Right ventricle myocardium inferior (tissue), 1 donor: ENCODE measurements at regions of chr4 and their contacts with region 1.

Region 1: GRCh38 chr4:88284439-88285234 is at the start of gene PPM1K:
- DNase-seq: peak; percentile 100
- ATAC-seq: peak; percentile 98
- total RNA-seq, gene PPM1K: 125 TPM

Region 2: DNA sequence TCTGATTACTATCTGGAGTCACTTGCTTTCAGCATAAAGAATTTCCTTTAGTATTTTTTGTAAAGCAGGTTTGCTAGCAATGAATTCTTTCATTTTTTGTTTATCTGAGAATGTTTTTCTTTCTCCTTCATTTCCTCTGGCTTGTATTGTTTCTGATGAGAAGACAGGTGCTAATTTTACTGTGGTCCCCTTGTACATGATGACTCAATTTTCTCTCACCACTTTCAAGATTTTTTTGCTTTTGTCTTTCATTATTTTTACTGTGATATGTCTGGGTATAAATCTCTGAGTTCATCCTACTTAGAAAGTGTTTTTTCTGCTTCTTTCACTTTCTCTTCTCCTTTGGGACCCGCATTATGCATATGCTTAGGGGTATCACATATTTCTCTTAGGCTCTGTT is 214.6 kb before region 1 on chr4:
- intact Hi-C with region 1: no loop called
- DNase-seq: no peak
- ATAC-seq: no peak

Region 3: GRCh38 chr4:88225232-88226105 is 59.2 kb before region 1 on chr4:
- intact Hi-C with region 1: loop called (anchors 10 kb)
- DNase-seq: no peak
- ATAC-seq: no peak

Region 4: GRCh38 chr4:88320780-88321373 is 36.2 kb after region 1 on chr4:
- intact Hi-C with region 1: no loop called
- DNase-seq: no peak
- ATAC-seq: peak; percentile 54

Region 5: GRCh38 chr4:88341227-88342192 is 56.9 kb after region 1 on chr4:
- intact Hi-C with region 1: loop called (anchors 2 kb)
- DNase-seq: no peak
- ATAC-seq: peak; percentile 97

Region 6: GRCh38 chr4:88378691-88379559 is 94.3 kb after region 1 on chr4 and contains the start of gene HERC6:
- intact Hi-C with region 1: loop called (anchors 1 kb)
- DNase-seq: peak; percentile 89
- ATAC-seq: peak; percentile 95
- total RNA-seq, gene HERC6: 6.1 TPM

Region 7: GRCh38 chr4:88456757-88457306 is 172.2 kb after region 1 on chr4 and contains the start of gene HERC5:
- intact Hi-C with region 1: loop called (anchors 2 kb)
- DNase-seq: peak; percentile 94
- ATAC-seq: peak; percentile 93
- total RNA-seq, gene HERC5: 1.6 TPM

Region 8: DNA sequence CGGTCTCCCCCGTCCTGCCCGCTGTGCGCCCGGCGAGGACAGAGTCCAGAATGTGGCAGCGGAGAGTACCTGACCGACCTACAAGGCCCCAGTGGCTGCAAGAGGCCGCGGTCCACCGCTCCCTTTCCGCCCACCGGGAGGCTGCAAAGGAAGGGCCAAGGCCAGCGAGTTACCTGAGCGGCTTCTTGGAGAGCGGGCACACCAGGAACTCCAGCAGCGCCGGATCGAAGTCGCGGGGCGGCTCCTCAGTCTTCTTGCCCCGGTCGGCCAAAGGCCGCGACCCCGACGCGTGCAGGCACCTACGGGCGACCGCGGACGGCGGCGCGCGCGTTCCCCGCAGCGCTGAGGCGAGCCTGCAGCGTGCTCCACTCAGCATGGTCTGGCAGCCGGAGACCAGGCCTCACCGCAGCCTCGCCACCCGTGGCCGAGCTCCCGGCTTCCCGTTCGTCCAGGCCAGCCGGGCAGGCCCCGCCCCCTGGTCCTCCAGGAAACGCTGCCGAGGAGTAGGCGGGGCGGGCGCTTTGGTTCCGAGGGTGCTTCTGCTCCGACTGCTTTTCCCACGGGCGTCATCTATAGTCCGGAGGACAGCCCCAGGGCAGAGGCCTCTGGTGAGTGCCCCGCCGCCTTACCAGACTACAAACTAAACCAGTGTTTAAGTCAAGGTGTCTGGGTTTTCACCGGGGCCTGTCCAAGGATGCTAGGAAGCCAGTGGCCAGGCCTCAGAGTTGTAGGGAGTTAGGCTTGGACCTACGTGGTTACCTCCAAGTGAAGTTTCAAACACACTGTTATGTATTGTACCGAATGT is 238.9 kb after region 1 on chr4 and contains the start of gene PYURF:
- intact Hi-C with region 1: loop called (anchors 5 kb)
- DNase-seq: peak; percentile 99
- ATAC-seq: peak; percentile 98
- total RNA-seq, gene PYURF: 56.3 TPM